ENCODE measurements at regions of chr6 and their contacts with region 1.

Region 1: GRCh38 chr6:2876210-2877056 is 26.7 kb downstream of the SERPINB9 start:
- DNase-seq: no peak
- H3K4me3 Mint-ChIP-seq: peak overlapping the region; percentile 75
- H3K27ac Mint-ChIP-seq: peak overlapping the region; percentile 80
- H3K4me1 Mint-ChIP-seq: peaks cover 80% of the 10 kb centered on the region
- H3K27me3 Mint-ChIP-seq: no peaks in the 10 kb centered on the region

Region 2: DNA sequence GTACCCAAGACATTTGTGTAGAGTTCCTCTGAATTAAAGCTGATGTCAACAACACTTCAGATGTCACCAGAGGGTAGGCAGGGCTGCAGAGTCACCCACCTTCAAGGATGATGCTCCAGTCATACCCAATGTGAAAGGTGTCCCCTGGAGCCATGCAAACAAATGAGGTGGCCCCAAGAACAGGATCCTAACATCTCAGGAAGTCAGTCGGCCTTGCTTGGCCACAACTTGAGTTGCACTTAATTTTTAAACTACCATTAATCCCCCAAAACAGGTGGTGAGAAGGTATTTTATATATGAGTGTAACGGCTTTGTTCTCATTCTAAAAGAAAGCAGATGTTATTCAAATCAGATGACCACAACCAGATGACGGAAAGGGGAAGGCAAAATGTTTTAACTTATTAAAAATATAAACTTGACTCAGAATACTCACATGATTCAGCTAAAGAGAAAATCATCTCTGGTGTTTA is 13.7 kb before region 1 on chr6:
- CTCF ChIA-PET with region 1: interaction called, 7 read pairs
- intact Hi-C with region 1: loop called (anchors 1 kb)
- DNase-seq: peak; percentile 73
- H3K4me3 Mint-ChIP-seq: peak overlapping the region; percentile 66
- H3K27ac Mint-ChIP-seq: peak overlapping the region; percentile 96
- H3K4me1 Mint-ChIP-seq: peaks cover 66% of the 10 kb centered on the region
- H3K27me3 Mint-ChIP-seq: no peaks in the 10 kb centered on the region

Region 3: GRCh38 chr6:2891768-2892170 is 15.3 kb after region 1 on chr6:
- CTCF ChIA-PET with region 1: interaction called, 5 read pairs
- intact Hi-C with region 1: loop called (anchors 1 kb)
- DNase-seq: peak; percentile 85
- H3K4me3 Mint-ChIP-seq: peak overlapping the region; percentile 75
- H3K27ac Mint-ChIP-seq: peak overlapping the region; percentile 88
- H3K4me1 Mint-ChIP-seq: peaks cover 71% of the 10 kb centered on the region
- H3K27me3 Mint-ChIP-seq: no peaks in the 10 kb centered on the region

Region 4: DNA sequence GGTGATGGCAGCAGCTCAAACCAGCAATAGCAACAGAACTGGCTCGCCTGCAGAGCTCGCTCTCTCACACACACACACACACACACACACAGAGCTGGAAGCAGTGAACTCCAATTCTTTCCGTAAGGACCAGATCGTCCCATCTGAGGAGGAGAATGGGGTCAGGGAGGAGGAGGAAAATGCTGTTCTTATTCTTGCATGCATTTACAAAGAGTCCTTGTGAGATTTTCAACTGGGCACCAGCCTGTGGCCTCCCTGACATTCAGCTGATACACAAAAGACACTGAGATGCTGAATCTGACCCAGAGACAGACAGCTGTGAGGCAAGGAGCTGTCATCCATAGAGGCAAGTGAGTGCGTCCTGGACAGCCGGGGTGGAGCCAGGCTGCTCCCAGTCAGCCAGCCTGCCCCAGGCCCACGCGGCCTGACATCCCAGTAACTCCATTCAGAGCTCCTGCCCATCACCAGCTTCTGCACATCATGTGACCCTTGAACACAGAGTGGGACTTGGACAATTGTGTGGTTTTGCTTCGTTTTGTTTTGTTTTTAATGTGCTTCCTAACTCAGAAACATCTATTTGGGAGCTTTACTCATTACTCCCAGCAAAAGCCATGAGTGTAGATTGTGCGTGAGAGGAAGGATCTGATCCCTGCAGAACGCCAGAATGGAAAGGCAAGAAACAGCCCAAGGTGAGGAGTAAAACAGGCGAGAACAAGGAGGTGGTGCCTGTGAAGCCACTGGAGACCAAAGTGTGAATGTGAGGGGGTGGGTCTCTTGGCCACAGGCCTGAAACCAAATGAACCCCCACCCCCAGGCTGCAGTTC is 24.6 kb after region 1 on chr6:
- CTCF ChIA-PET with region 1: interaction called, 4 read pairs
- intact Hi-C with region 1: loop called (anchors 1 kb)
- DNase-seq: no peak
- H3K4me3 Mint-ChIP-seq: peak overlapping the region; percentile 99
- H3K27ac Mint-ChIP-seq: peak overlapping the region; percentile 96
- H3K4me1 Mint-ChIP-seq: peaks cover 52% of the 10 kb centered on the region
- H3K27me3 Mint-ChIP-seq: no peaks in the 10 kb centered on the region

Measured in activated naive CD4-positive, alpha-beta T cell treated with anti-CD3 and anti-CD28 coated beads for 36 hours (primary cell).